ENCODE measurements at regions of chr3 and their contacts with region 1.

Region 1: GRCh38 chr3:37308247-37308646 is 133.9 kb upstream of the LRRFIP2 start:
- DNase-seq: no peak
- H3K4me3 ChIP-seq: no peak overlapping the region
- H3K27ac ChIP-seq: no peak overlapping the region
- H3K4me1 ChIP-seq: no peaks in the 10 kb centered on the region
- H3K27me3 ChIP-seq: no peaks in the 10 kb centered on the region
- CTCF ChIP-seq: peak in 1 of 3 experiments; percentile 10; a peak in 2 of 4 replicates
- EP300 ChIP-seq: no peak
- POLR2A ChIP-seq: no peak
- RAD21 ChIP-seq: 0 out of 4 replicates have a peak, but pooled peaks of 1 of the 2 experiments have one; percentile 21

Region 2: DNA sequence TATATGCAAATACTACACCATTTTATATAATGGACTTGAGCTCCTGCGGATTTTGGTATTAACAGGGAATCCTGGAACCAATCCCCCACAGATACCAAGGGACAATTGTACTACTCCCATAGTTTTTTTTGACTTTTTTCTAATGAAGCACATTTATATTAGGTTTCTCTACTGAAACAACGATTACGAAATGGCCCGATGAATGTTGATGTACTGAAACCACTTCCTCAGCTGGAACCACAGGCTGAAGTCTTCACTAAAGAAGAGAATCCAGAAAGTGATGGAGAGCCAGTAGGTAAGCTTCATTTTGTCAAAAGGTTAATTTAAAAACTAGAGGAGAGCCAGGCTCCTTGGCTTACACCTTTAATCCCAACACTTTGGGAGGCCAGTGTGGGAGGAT is 12.3 kb before region 1 on chr3:
- CTCF ChIA-PET with region 1: interaction called, 37 read pairs
- POLR2A ChIA-PET with region 1: no interaction called
- DNase-seq: no peak
- H3K4me3 ChIP-seq: no peak overlapping the region
- H3K27ac ChIP-seq: no peak overlapping the region
- H3K4me1 ChIP-seq: peaks cover 0 to 4% (median 1%) of the 10 kb centered on the region in 4 experiments; a peak in 3 of 7 replicates
- H3K27me3 ChIP-seq: no peaks in the 10 kb centered on the region
- CTCF ChIP-seq: no peak
- EP300 ChIP-seq: no peak
- POLR2A ChIP-seq: no peak
- RAD21 ChIP-seq: no peak

Region 3: GRCh38 chr3:37319784-37320183 is 11.5 kb after region 1 on chr3:
- CTCF ChIA-PET with region 1: interaction called, 14 read pairs
- POLR2A ChIA-PET with region 1: interaction called, 4 read pairs
- DNase-seq: no peak
- H3K4me3 ChIP-seq: no peak overlapping the region
- H3K27ac ChIP-seq: no peak overlapping the region
- H3K4me1 ChIP-seq: no peaks in the 10 kb centered on the region
- H3K27me3 ChIP-seq: no peaks in the 10 kb centered on the region
- CTCF ChIP-seq: no peak
- EP300 ChIP-seq: no peak
- POLR2A ChIP-seq: no peak
- RAD21 ChIP-seq: no peak

Measured in H1 (cell line).